AG04449 (cell line): ENCODE measurements at regions of chr9 and their contacts with region 1.

Region 1: DNA sequence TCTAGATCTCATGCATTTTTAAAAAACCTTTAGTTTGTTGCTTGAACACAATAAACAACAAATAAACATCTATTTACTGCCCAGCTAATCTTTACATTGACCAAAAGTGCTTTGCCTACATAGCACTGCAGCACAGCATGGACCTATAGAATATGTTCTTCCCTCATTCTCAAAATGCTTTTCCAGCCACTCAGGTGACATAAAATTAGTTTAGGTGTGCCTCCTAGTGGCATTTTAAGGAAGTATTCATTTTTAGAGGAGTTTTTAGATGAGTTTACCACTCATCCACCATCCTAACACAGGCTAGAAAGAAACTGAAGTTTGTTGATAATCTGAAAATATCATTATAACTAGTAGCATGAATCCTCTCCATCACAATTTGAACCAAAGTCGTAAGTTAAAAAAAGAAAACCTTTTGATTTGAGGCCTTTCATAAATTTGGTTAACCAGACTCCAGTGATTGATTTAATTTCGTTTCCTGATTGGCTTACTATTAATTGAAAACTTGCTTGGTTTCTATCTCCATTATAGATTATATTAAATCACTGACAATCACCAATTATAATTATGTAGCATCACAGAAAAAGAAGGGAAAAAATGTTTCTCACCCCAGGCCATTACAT is 12.6 kb downstream of the PLGRKT start:
- DNase-seq: no peak
- H3K4me3 ChIP-seq: no peak overlapping the region
- CTCF ChIP-seq: peak; percentile 6

Region 2: GRCh38 chr9:5402217-5402616 is 22.9 kb before region 1 on chr9:
- CTCF ChIA-PET with region 1: no interaction called
- POLR2A ChIA-PET with region 1: no interaction called
- DNase-seq: no peak
- H3K4me3 ChIP-seq: no peak overlapping the region
- CTCF ChIP-seq: no peak

Region 3: DNA sequence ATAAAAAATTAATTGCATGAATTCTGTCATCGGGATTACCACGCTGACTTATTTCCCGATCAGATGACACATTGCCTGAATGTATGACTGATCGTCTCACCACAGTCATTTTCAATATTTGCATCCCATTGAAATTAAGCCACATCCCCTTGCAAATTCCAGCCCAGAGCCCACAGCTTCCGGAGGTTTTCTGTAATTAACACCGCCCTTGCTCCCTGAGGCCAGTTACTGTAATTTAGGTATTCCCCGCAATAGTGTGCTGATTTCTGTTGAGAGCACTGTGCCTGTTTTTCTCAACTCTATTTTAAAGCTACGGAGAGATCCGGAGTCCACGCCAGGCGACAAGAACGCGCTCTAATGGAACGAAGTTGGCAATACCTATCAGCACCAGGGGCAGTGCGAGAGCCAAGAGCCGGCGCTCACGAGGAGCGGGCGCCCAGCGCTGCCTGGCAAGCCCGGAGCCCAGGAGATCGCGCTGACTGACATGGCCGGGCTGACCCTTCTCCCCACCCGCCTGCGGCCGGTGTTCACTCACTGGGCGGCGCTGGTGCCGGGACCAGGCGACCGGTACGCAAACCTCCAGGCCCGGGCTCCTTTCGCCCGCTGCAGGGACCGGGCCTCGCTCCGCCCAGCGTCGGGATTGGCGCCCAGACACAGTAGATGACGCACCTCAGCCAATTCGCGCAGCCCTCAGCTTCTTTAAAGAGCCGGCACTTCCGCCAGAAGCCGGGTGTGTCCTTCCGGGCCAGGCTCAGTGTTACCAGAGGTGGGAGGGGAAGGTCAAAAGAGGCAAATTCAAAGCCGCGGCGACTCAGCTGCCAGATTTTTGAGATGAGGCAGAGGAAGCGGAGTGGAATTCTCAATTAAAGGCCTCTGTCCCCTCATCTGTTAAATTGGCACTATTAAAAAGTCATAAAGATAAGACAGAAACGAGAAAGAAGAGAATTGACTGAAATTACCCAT is 12.4 kb after region 1 on chr9 and contains the start of gene PLGRKT:
- CTCF ChIA-PET with region 1: interaction called, 11 read pairs
- POLR2A ChIA-PET with region 1: no interaction called
- DNase-seq: no peak
- H3K4me3 ChIP-seq: peak within 1 kb of the TSS; percentile 78
- CTCF ChIP-seq: no peak